Dorsolateral prefrontal cortex (tissue), 120 donors: ENCODE measurements at regions of chr19 and their contacts with region 1.

Region 1: DNA sequence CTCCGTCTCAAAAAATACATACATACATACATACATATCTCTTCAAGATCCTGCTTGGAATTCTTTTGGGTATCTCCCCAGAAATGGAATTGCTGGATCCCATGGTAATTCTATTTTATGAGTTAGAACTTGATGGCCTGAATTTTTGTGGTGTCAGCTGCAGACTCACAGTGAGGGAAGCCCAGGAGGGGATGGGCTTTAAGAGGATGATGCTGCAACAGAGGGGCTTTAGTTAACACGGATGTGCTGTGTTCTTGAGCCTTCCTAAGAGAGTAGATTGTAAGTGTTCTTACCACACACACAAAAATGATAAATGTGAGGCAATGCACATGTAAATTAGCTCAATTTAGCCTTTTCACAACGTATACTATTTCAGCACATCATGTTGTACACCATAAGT is 31.8 kb downstream of the CACNG6 start:
- DNase-seq: no peak
- H3K4me3 ChIP-seq: no peak overlapping the region
- H3K27ac ChIP-seq: no peak overlapping the region
- H3K27me3 ChIP-seq: peaks cover 0 to 9% (median 0%) of the 10 kb centered on the region in 45 donors
- CTCF ChIP-seq: no peak

Region 2: DNA sequence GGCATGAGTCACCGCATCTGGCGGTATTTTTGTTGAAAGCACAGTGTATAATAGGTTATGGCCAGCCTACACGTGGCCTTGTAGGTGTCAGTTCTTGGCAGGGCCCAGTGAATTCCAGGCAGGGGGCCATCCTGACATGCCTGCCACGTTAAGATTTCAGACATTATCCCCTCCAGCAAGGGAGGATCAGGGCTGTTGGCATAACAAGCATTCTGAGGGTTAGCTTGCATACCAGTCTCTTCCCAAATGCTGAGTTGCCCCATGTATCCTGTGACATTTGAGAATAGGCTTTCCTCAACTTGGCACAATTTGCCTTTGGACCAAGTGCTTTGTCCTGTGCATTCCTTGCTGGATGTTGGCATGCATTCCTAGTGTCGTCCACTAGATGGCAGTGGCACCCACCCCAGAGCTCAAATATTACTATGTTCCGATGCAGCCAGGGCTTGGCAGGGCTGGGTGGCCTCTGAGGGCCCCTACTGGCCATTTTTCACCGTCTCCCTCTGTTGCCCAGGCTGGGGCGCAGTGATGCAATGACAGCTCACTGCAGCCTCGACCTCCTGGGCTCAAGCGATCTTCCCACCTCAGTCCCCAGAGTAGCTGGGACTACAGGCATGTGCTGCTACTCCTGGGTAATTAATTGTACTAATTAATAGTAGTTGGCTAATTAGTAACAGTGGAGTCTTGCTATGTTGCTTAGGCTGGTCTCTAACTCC is 230.3 kb before region 1 on chr19:
- intact Hi-C with region 1: loop called in 1 of 2 experiments (anchors 5 kb)
- DNase-seq: peak; percentile 73 to 89 (median 82)
- H3K4me3 ChIP-seq: no peak overlapping the region
- H3K27ac ChIP-seq: no peak overlapping the region
- H3K27me3 ChIP-seq: peaks cover 0 to 3% (median 0%) of the 10 kb centered on the region in 45 donors
- CTCF ChIP-seq: peak; percentile 76 to 100 (median 99)

Region 3: GRCh38 chr19:53808710-53809125 is 214.5 kb before region 1 on chr19:
- intact Hi-C with region 1: loop called (anchors 2 to 10 kb)
- DNase-seq: no peak
- H3K4me3 ChIP-seq: no peak overlapping the region
- H3K27ac ChIP-seq: no peak overlapping the region
- H3K27me3 ChIP-seq: no peaks in the 10 kb centered on the region
- CTCF ChIP-seq: peak; percentile 11 to 75 (median 54)

Region 4: DNA sequence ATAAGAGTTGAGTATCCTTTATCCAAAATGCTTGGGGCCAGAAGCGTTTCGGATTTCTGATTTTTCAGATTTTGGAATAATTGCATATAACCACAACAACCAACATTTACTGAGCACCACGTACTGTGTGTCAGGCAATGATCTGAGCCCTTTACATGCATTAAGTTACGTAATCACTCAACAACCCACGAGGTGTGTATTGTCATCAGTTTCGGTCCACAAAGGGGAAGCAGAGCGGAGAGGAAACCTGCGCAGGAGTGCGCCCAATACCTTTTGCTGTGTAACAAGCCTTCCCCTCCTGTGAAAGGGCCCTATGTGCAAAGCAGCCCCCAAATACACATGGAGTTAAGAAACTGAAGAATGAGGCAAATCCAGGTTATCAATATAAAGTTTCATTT is 178.3 kb before region 1 on chr19:
- intact Hi-C with region 1: loop called (anchors 2 to 5 kb)
- DNase-seq: no peak
- H3K4me3 ChIP-seq: no peak overlapping the region
- H3K27ac ChIP-seq: no peak overlapping the region
- H3K27me3 ChIP-seq: no peaks in the 10 kb centered on the region
- CTCF ChIP-seq: no peak

Region 5: DNA sequence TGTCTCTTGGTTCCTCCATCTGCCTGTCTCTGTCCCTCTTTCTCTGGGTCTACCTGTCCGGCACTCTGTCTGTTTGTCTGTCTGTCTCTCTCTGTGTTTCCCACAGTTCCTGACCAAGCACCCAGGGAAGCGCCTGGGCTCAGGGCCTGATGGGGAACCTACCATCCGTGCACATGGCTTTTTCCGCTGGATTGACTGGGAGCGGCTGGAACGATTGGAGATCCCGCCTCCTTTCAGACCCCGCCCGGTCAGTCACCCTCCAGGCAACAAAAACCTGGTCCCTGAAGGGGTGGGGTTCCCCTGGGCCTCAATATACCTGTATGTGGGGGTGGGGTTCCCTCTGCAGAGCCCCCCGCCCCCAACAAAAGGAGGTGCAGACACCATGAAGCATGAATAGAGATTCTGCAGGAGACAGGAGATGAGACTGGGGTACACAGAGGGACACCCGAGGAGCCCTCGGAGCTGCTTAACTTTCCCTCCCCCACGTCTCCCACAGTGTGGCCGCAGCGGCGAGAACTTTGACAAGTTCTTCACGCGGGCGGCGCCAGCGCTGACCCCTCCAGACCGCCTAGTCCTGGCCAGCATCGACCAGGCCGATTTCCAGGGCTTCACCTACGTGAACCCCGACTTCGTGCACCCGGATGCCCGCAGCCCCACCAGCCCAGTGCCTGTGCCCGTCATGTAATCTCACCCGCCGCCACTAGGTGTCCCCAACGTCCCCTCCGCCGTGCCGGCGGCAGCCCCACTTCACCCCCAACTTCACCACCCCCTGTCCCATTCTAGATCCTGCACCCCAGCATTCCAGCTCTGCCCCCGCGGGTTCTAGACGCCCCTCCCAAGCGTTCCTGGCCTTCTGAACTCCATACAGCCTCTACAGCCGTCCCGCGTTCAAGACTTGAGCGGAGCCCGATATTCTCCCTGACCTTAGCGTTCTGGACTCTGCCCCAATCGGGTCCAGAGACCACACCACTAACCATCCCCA is 116.7 kb before region 1 on chr19:
- intact Hi-C with region 1: loop called (anchors 2 kb)
- DNase-seq: peak; percentile 53 to 83 (median 70)
- H3K4me3 ChIP-seq: peak overlapping the region in 52 of 59 donors; percentile 1 to 94 (median 78)
- H3K27ac ChIP-seq: peak overlapping the region in 6 of 59 donors; percentile 70 to 89 (median 77)
- H3K27me3 ChIP-seq: peaks cover 0 to 27% (median 0%) of the 10 kb centered on the region in 45 donors
- CTCF ChIP-seq: peak; percentile 42 to 93 (median 84)

Region 6: DNA sequence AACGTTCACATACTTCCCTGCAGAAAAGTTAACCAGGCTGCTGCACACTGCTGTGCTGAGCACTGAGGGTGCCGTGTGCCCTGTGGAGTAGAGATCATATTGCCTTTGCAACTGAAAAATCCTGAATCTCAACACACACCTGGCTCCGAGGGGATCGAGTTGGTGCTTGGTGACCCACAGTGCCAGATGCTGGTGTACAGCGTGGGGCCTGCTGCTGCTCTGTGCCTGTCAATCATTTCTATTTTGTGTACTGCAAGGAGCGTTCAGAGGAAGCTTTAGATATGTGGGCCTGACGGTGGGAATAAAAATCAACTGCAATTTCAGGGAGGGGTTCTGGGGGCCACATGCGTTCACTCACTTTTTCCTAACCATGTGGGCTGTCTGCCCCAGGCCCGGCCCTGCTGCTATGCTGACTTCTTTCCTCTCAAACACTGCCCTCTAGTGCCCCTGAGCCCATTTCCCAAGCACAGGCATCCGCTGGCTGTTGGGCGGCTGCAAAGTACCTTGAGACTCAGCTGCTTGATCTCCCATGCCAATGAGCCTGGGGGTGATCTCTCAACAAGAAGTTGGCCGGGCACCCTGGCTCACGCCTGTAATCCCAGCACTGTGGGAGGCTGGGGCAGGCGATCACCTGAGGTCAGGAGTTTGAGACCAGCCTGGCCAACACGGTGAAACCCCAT is 416.1 kb after region 1 on chr19:
- intact Hi-C with region 1: no loop called
- DNase-seq: peak in 8 of 10 donors; percentile 62 to 82 (median 78)
- H3K4me3 ChIP-seq: peak overlapping the region in 3 of 59 donors; percentile 0 to 8 (median 4)
- H3K27ac ChIP-seq: peak overlapping the region in 54 of 59 donors; percentile 0 to 92 (median 73)
- H3K27me3 ChIP-seq: no peaks in the 10 kb centered on the region
- CTCF ChIP-seq: peak in 55 of 56 donors; percentile 38 to 89 (median 71)